CD4-positive, alpha-beta memory T cell (primary cell): ENCODE measurements at regions of chr17 and their contacts with region 1.

Region 1: DNA sequence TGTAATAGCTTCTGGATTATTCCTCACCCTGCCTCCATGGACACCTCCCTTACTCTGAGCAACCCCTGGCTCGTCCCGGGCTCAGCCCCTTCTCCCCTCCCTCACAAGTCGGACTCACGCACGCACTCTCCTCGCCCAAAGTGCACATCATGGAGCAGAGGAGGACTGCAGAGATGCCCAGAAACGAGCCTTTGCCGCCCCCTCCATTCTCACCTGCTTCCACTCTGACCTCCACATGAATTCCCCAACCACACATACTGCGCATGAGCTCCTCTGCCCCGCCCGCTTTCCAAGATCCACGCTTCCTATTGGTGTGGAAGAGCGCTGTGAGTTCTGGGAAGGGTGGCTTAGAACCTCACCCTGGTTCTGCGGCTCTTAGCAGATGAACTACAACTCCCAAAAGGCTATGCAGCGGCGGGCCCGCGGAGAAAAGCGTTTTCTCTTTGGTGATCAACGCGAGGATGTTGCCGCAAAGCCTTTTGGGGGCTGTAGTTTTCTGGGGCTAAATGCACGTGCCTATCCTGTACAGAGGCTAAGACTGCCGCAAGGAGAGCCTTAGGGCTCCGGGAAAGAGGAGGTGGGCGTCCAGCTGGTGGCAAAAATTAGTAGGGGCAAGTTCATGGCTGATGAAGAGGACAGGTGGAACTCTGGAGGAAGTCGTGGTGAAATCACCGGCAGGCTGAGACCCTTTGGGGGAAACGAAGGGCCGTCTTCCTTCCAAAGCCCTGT is at the start of gene PHB1:
- DNase-seq: peak; percentile 93 to 99 (median 94)
- H3K4me3 ChIP-seq: peak within 1 kb of the TSS; percentile 81 to 89
- H3K4me3 Mint-ChIP-seq: peak within 1 kb of the TSS; percentile 97 to 99 (median 98)
- H3K27ac ChIP-seq: peak within 1 kb of the TSS; percentile 65
- H3K27ac Mint-ChIP-seq: peak within 1 kb of the TSS; percentile 78 to 99 (median 96)
- H3K4me1 ChIP-seq: peaks cover 18% of the 10 kb centered on the region
- H3K4me1 Mint-ChIP-seq: peaks cover 14 to 27% (median 20%) of the 10 kb centered on the region in 4 donors
- H3K27me3 ChIP-seq: no peaks in the 10 kb centered on the region
- H3K27me3 Mint-ChIP-seq: no peaks in the 10 kb centered on the region
- total RNA-seq, gene PHB1: 62.0 to 64.2 TPM

Region 2: GRCh38 chr17:48830840-48831548 is 583.8 kb before region 1 on chr17 and contains the start of gene CALCOCO2:
- CTCF ChIA-PET with region 1: no interaction called
- POLR2A ChIA-PET with region 1: no interaction called
- intact Hi-C with region 1: loop called (anchors 10 kb)
- DNase-seq: peak; percentile 78 to 85 (median 81)
- H3K4me3 ChIP-seq: peak within 1 kb of the TSS; percentile 74 to 82
- H3K4me3 Mint-ChIP-seq: peak within 1 kb of the TSS; percentile 96 to 99 (median 98)
- H3K27ac ChIP-seq: peak within 1 kb of the TSS; percentile 98
- H3K27ac Mint-ChIP-seq: peak within 1 kb of the TSS; percentile 94 to 100 (median 99)
- H3K4me1 ChIP-seq: peaks cover 46% of the 10 kb centered on the region
- H3K4me1 Mint-ChIP-seq: peaks cover 22 to 54% (median 42%) of the 10 kb centered on the region in 4 donors
- H3K27me3 ChIP-seq: no peaks in the 10 kb centered on the region
- H3K27me3 Mint-ChIP-seq: peaks cover 2 to 5% of the 10 kb centered on the region in 2 donors
- total RNA-seq, gene CALCOCO2: 107 to 118 TPM

Region 3: GRCh38 chr17:49063652-49064051 is 351.1 kb before region 1 on chr17:
- CTCF ChIA-PET with region 1: no interaction called
- POLR2A ChIA-PET with region 1: no interaction called
- intact Hi-C with region 1: no loop called
- DNase-seq: no peak
- H3K4me3 ChIP-seq: no peak overlapping the region
- H3K4me3 Mint-ChIP-seq: no peak overlapping the region
- H3K27ac ChIP-seq: no peak overlapping the region
- H3K27ac Mint-ChIP-seq: no peak overlapping the region
- H3K4me1 ChIP-seq: no peaks in the 10 kb centered on the region
- H3K4me1 Mint-ChIP-seq: no peaks in the 10 kb centered on the region
- H3K27me3 ChIP-seq: no peaks in the 10 kb centered on the region
- H3K27me3 Mint-ChIP-seq: peaks cover 0 to 4% of the 10 kb centered on the region in 2 donors

Region 4: GRCh38 chr17:49361902-49362722 is 52.7 kb before region 1 on chr17 and contains the start of gene ZNF652:
- CTCF ChIA-PET with region 1: no interaction called
- POLR2A ChIA-PET with region 1: interaction called, 6 read pairs
- intact Hi-C with region 1: loop called (anchors 1 kb)
- DNase-seq: peak; percentile 96 to 98 (median 97)
- H3K4me3 ChIP-seq: peak within 1 kb of the TSS; percentile 48 to 61
- H3K4me3 Mint-ChIP-seq: peak within 1 kb of the TSS; percentile 91 to 98 (median 94)
- H3K27ac ChIP-seq: peak within 1 kb of the TSS; percentile 66
- H3K27ac Mint-ChIP-seq: peak within 1 kb of the TSS; percentile 91 to 98 (median 96)
- H3K4me1 ChIP-seq: peaks cover 62% of the 10 kb centered on the region
- H3K4me1 Mint-ChIP-seq: peaks cover 43 to 64% (median 57%) of the 10 kb centered on the region in 4 donors
- H3K27me3 ChIP-seq: no peaks in the 10 kb centered on the region
- H3K27me3 Mint-ChIP-seq: no peaks in the 10 kb centered on the region
- total RNA-seq, gene ZNF652: 64.2 to 68.6 TPM

Region 5: DNA sequence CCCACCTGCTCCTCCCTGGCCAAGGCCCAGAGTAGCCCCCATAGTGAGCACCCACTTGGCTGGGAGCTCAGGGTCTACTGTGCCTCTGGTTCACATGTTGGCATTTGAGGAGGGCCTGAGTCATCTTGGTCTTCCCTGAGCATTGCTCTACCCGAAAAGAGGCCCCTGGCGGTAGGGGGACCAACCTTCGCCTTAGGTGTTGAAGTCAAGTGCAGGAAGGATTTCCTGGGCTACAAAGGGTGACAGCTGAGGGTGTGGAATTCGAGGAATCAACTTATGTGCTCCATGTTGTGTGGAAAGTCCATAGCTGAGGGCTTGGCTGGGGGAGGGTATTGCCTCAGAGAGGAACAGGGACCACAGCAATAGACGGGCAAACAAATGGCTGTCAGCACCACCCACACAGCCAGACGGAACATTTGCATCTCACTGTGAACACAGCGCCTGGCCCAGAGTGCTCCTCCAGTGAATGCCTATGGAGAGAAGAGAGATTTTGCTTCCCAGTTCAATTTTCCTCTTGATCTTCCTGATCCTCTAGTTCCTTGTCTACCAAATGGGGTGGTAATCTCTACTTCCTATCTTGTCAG is 44.7 kb after region 1 on chr17:
- CTCF ChIA-PET with region 1: no interaction called
- POLR2A ChIA-PET with region 1: no interaction called
- intact Hi-C with region 1: no loop called
- DNase-seq: no peak
- H3K4me3 ChIP-seq: no peak overlapping the region
- H3K4me3 Mint-ChIP-seq: no peak overlapping the region
- H3K27ac ChIP-seq: no peak overlapping the region
- H3K27ac Mint-ChIP-seq: no peak overlapping the region
- H3K4me1 ChIP-seq: no peaks in the 10 kb centered on the region
- H3K4me1 Mint-ChIP-seq: peaks cover 0 to 1% (median 0%) of the 10 kb centered on the region in 4 donors
- H3K27me3 ChIP-seq: peaks cover 6% of the 10 kb centered on the region
- H3K27me3 Mint-ChIP-seq: peaks cover 49 to 50% of the 10 kb centered on the region in 2 donors

Region 6: GRCh38 chr17:49496183-49496866 is 81.5 kb after region 1 on chr17:
- CTCF ChIA-PET with region 1: interaction called, 6 read pairs
- POLR2A ChIA-PET with region 1: no interaction called
- intact Hi-C with region 1: loop called (anchors 2 kb)
- DNase-seq: peak; percentile 79 to 84 (median 80)
- H3K4me3 ChIP-seq: peak overlapping the region; percentile 23 to 76
- H3K4me3 Mint-ChIP-seq: peak overlapping the region; percentile 74 to 87 (median 82)
- H3K27ac ChIP-seq: no peak overlapping the region
- H3K27ac Mint-ChIP-seq: peak overlapping the region in 2 of 7 donors; percentile 12 to 25
- H3K4me1 ChIP-seq: peaks cover 34% of the 10 kb centered on the region
- H3K4me1 Mint-ChIP-seq: peaks cover 11 to 41% (median 16%) of the 10 kb centered on the region in 4 donors
- H3K27me3 ChIP-seq: peaks cover 33% of the 10 kb centered on the region
- H3K27me3 Mint-ChIP-seq: peaks cover 32% of the 10 kb centered on the region in 2 donors